ENCODE measurements at regions of chr17 and their contacts with region 1.

Region 1: GRCh38 chr17:73255671-73256181 is 6.0 kb downstream of the CPSF4L start:
- DNase-seq: peak; percentile 46 to 93
- H3K4me3 ChIP-seq: no peak overlapping the region
- H3K27ac ChIP-seq: no peak overlapping the region
- H3K4me1 ChIP-seq: peaks cover 0 to 8% (median 4%) of the 10 kb centered on the region in 4 experiments; a peak in 3 of 7 replicates
- H3K27me3 ChIP-seq: peaks cover 0 to under 1% (median 0%) of the 10 kb centered on the region in 4 experiments; a peak in 1 of 7 replicates
- CTCF ChIP-seq: peak; percentile 94 to 99 (median 98)
- EP300 ChIP-seq: no peak; a peak in 1 of 3 replicates
- POLR2A ChIP-seq: no peak
- RAD21 ChIP-seq: peak; percentile 99 to 100

Region 2: DNA sequence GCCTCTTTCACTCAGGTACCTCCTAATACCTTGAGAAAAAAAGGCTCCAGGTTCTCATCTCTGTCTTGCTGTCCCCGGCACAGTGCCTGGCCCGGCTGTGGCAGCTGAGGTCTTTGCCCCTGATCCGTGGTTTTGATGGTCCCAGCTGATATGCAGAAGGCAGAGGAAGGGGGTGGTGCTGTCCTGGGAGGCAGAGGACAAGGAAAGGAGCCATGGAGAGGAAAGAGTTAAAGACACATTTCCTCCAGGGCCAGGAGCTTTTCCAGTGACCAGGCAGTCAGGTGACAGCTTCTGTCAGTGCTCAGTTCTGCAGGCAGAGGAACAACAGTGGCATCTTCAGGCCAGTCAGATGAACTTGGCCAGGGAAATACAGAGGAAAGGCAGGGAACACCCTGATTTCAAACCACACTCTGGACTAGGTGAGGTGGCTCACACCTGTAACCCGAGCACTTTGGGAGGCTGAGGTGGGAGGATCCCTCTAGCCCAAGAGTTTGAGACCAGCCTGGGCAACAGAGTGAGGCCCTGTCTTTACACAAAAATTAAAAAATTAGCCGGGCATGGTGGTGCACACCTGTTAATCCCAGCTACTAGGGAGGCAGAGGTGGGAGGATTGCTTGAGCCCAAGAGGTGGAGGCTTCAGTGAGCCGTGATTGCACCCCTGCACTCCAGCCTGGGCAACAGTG is 66.2 kb before region 1 on chr17:
- CTCF ChIA-PET with region 1: no interaction called
- POLR2A ChIA-PET with region 1: no interaction called
- DNase-seq: no peak
- H3K4me3 ChIP-seq: no peak overlapping the region
- H3K27ac ChIP-seq: no peak overlapping the region
- H3K4me1 ChIP-seq: peaks cover 0 to 8% (median 2%) of the 10 kb centered on the region in 4 experiments; a peak in 2 of 7 replicates
- H3K27me3 ChIP-seq: no peaks in the 10 kb centered on the region
- CTCF ChIP-seq: peak; percentile 66 to 92 (median 81)
- EP300 ChIP-seq: no peak
- POLR2A ChIP-seq: no peak
- RAD21 ChIP-seq: peak; percentile 96

Region 3: GRCh38 chr17:73237714-73238113 is 18.0 kb before region 1 on chr17:
- CTCF ChIA-PET with region 1: interaction called, 57 read pairs
- POLR2A ChIA-PET with region 1: interaction called, 3 read pairs
- DNase-seq: no peak
- H3K4me3 ChIP-seq: no peak overlapping the region
- H3K27ac ChIP-seq: no peak overlapping the region
- H3K4me1 ChIP-seq: peaks cover 0 to 4% (median 1%) of the 10 kb centered on the region in 4 experiments; a peak in 4 of 7 replicates
- H3K27me3 ChIP-seq: no peaks in the 10 kb centered on the region
- CTCF ChIP-seq: no peak
- EP300 ChIP-seq: no peak
- POLR2A ChIP-seq: no peak
- RAD21 ChIP-seq: no peak

Region 4: DNA sequence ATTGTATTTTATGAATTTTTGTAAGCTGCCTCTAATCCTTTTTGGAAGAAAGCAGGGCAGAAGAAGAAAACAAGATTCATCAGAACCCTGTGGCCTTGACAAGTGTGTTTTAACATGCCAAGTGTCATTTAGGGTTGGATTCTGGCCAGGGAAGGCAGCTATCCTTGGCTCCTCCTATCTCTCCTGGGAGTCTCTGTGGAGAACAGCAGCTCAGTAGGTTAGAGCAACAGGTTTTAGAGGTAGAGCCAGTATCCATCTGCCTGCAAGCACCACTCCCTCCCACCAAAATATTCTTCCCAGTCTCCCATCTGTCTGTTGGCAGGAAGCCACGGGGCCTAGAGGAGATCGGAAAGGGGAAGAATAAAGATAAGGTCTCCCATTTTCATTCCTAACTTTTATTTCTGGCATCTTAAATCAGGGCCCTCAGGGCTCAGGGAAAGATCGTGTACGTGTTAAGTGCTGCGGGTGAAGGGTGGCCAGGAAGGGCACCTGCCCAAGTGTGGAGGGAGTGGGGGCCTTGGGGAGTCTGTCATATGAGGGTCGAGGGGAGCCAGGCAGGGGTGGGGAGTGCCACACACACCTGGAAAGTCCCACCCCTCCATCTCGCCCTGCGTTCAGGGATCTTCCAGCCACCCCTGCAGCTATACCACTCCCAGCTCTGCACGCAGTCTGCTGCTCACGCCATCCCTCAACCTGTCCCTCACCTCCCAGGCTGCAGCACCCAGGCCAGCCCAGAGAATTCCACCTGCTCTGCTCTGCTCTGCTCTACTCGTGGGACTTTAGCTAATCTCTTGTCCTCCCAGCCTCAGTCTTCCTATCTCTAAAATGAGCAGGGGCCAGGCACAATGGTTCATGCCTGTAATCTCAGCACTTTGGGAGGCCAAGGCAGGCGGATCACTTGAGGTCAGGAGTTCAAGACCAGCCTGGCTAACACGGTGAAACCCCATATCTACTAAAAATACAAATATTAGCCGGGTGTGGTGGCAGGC is 23.0 kb after region 1 on chr17:
- CTCF ChIA-PET with region 1: interaction called, 22 read pairs
- POLR2A ChIA-PET with region 1: interaction called, 3 read pairs
- DNase-seq: no peak
- H3K4me3 ChIP-seq: no peak overlapping the region
- H3K27ac ChIP-seq: no peak overlapping the region
- H3K4me1 ChIP-seq: peaks cover 0 to 4% (median 2%) of the 10 kb centered on the region in 4 experiments; a peak in 4 of 7 replicates
- H3K27me3 ChIP-seq: no peaks in the 10 kb centered on the region
- CTCF ChIP-seq: no peak
- EP300 ChIP-seq: no peak
- POLR2A ChIP-seq: no peak
- RAD21 ChIP-seq: no peak

Region 5: DNA sequence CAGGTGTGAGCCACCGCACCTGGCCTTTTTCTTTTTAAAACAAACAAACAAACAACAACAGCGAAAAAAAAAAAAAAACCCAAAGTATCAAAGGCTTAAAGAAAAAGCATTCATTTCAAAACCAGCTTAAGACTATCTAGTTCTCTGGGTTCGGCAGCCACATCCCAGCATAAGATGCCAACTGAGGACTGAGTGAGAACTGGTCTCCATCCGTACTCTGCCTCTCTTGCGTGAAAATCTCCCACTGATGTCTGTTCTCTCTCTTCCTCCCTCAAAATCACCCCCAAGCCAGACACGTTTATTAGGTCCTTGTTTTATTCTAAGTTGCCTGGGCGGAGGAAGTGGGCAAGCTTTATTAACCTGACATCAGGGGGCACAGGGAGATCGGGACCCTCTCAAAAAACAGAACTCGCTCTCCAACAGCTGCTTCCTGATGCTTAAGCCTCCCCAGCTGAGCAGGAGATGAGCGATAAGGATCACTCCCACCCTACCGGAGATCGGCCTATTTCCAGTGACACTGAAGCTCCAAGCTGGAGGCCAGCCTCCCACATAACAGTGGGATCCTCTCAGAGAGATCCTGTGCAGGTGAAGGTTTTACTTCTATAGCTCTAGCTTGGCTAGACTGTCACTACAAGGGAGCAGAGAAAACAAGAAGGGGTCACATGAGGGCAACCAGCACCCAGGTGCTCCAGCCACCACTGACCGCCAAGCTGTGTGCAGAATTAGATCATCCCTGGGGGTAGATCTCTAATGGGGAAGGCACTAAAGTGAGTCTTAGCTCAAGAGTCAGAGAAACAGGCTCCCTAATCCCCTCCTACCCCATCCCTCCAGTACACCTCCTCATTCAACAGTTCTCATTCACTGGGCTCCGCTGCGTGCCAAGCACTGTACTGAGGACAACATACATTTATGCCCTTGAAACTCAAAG is 42.5 kb after region 1 on chr17:
- CTCF ChIA-PET with region 1: interaction called, 16 read pairs
- POLR2A ChIA-PET with region 1: no interaction called
- DNase-seq: no peak
- H3K4me3 ChIP-seq: no peak overlapping the region
- H3K27ac ChIP-seq: no peak overlapping the region
- H3K4me1 ChIP-seq: no peaks in the 10 kb centered on the region
- H3K27me3 ChIP-seq: no peaks in the 10 kb centered on the region
- CTCF ChIP-seq: no peak
- EP300 ChIP-seq: no peak
- POLR2A ChIP-seq: no peak
- RAD21 ChIP-seq: no peak

Region 6: DNA sequence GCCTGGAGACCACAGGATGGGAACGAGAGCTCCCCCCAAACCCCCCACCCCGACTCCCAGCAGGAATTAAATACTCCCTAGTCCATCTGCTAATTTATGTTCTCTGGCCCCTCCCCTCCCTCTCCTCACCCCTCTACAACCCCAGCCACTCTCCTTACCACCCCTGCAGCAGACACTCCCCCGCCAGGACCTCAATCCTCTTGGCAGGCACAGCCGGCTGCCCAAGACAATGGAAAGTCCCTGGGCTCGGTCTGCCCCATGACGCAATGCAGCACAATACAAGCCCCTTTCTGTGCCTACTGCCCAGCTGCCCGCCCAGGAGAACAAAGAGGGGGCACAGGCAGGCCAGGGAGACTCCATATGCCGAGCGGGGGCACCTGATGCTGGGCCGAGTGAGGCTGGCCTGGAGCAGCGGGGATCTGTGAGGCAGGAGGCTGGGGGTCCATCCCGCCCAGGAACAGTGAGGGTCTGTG is 86.4 kb after region 1 on chr17:
- CTCF ChIA-PET with region 1: interaction called, 40 read pairs
- POLR2A ChIA-PET with region 1: no interaction called
- DNase-seq: peak; percentile 70 to 78
- H3K4me3 ChIP-seq: peak overlapping the region in 2 of 4 experiments; percentile 14 to 17; a peak in 3 of 8 replicates
- H3K27ac ChIP-seq: peak overlapping the region; percentile 82
- H3K4me1 ChIP-seq: peaks cover 10 to 33% (median 27%) of the 10 kb centered on the region in 4 experiments
- H3K27me3 ChIP-seq: no peaks in the 10 kb centered on the region
- CTCF ChIP-seq: no peak
- EP300 ChIP-seq: peak in 1 of 2 experiments; percentile 86; a peak in 1 of 3 replicates
- POLR2A ChIP-seq: peak in 1 of 2 experiments; percentile 46; a peak in 1 of 3 replicates
- RAD21 ChIP-seq: peak in 1 of 2 experiments; percentile 12; a peak in 1 of 4 replicates

Region 7: DNA sequence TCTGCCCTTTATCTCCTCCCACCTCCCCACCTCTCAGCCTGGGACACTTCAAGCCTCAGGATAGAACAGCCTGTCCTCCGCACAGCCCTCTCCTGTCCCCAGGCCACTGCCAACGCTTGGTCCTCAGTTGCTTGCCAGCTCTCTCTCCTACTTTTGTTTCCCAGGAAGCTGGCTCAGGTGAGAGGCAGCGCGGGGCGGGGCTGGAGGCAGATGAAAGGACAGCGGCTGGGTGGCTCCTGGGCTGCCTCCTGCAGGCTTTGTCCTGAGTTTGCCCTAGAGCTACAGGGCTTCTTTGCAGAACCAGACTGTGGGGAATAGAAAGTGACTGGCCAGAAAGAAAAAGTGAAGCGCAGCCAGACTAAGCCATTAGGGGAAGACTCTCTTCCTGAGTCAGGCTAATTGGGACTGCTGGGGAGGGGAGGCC is 104.3 kb after region 1 on chr17:
- CTCF ChIA-PET with region 1: interaction called, 439 read pairs
- POLR2A ChIA-PET with region 1: interaction called, 3 read pairs
- DNase-seq: peak; percentile 59 to 81
- H3K4me3 ChIP-seq: peak overlapping the region in 1 of 4 experiments; percentile 34; a peak in 3 of 8 replicates
- H3K27ac ChIP-seq: no peak overlapping the region
- H3K4me1 ChIP-seq: peaks cover 4 to 33% (median 26%) of the 10 kb centered on the region in 4 experiments
- H3K27me3 ChIP-seq: no peaks in the 10 kb centered on the region
- CTCF ChIP-seq: peak; percentile 33 to 42 (median 34)
- EP300 ChIP-seq: no peak
- POLR2A ChIP-seq: no peak
- RAD21 ChIP-seq: peak; percentile 23 to 58; a peak in 3 of 4 replicates

Measured in H1 (cell line).